Mammary epithelial cell (primary cell): ENCODE measurements at regions of chr1 and their contacts with region 1.

Region 1: GRCh38 chr1:244137725-244138124 is 86.6 kb downstream of the ZBTB18 start:
- DNase-seq: no peak
- H3K4me3 ChIP-seq: no peak overlapping the region
- H3K27ac ChIP-seq: no peak overlapping the region
- H3K4me1 ChIP-seq: no peaks in the 10 kb centered on the region
- H3K27me3 ChIP-seq: no peaks in the 10 kb centered on the region
- CTCF ChIP-seq: no peak

Region 2: DNA sequence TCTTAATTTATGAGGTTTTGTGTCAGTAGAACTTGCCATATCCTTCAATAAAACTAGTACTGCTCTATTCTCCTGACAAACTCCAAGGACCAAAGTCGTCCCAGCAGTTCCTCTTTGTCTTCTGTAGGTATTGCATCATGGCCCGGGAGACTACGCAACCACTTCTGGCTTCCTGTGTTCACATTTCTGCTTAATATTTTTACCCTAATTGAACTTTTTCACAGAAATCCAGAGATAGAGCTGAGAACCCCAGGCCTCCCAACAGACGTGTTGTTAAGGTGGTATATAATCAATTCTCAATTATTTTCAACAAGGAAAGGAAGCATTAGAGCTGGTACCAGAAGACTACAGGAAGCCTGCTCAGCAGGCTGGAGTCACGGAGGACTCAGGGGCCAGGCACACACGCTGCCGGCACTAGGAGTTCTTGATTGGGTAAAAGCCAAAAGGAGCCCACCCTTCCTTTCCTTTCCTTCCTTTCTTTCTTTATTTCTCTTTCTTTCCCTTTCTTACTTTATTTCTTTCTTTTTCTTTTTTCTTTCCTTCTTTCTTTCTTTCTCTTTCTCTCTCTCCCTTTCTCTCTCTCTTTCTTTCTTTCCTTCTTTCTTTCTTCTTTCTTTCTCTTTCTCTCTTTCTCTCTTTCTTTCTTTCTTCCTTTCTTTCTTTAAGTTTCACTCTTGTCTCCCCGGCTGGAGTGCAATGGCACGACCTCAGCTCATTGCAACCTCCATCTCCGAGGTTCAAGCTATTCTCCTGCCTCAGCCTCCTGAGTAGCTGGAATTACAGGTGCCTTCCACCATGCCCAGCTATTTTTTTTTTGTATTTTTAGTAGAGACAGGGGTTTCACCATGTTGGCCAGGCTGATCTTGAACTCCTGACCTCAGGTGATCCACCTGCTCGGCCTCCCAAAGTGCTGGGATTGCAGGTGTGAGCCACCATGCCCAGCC is 87.0 kb after region 1 on chr1:
- CTCF ChIA-PET with region 1: no interaction called
- dilution Hi-C with region 1: loop called (anchors 5 kb)
- in situ Hi-C with region 1: no loop called
- intact Hi-C with region 1: no loop called
- DNase-seq: no peak
- H3K4me3 ChIP-seq: no peak overlapping the region
- H3K27ac ChIP-seq: no peak overlapping the region
- H3K4me1 ChIP-seq: no peaks in the 10 kb centered on the region
- H3K27me3 ChIP-seq: no peaks in the 10 kb centered on the region
- CTCF ChIP-seq: no peak